SK-N-SH (cell line): ENCODE measurements at regions of chr15 and their contacts with region 1.

Region 1: DNA sequence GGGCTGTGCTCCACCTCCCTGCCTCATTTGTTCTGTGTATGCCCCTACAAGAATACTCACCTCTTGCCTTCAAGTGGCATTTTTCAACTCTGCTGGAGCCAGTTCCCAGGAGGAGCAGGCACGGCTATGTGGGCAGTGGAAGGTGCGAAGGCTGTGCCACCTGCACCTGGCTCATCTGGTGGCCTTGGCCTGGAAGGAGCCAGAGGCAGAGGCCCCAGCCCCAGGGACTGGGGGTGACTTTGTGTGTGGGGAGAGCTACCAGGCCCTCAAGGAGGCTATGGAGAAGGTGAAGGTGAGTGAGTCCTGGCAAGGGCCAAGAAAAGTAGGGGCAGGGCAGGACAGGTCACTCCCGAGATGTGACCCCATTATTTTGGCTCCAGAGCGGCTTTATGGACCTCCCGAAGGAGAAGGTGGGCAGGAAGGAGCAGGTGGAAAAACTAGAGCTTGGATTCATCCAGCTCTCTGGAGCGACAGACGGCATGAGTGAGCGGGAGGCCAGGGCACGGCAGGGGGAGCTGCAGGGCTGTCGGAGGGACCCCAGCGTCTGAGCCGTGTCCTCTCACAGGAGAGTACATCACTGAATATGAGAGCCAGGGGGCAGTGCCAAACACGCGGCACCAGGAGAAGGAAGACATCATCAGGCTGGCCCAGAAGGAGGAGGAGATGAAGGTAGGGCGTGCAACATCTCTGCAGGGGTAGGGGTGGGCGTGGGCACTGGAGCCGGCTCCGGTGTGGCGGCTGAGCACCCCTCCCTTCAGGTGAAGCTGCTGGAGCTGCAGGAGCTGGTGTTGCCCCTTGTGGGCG is 57.3 kb upstream of the UBE2Q2 start:
- DNase-seq: peak; percentile 86
- H3K4me3 ChIP-seq: peak overlapping the region in 1 of 2 experiments; percentile 47; a peak in 3 of 4 replicates
- H3K27ac ChIP-seq: no peak overlapping the region
- H3K4me1 ChIP-seq: peaks cover 0 to 3% of the 10 kb centered on the region in 2 experiments; a peak in 1 of 4 replicates
- H3K27me3 ChIP-seq: peaks cover 49% of the 10 kb centered on the region
- CTCF ChIP-seq: peak; percentile 46
- EP300 ChIP-seq: no peak
- RAD21 ChIP-seq: peak; percentile 82

Region 2: DNA sequence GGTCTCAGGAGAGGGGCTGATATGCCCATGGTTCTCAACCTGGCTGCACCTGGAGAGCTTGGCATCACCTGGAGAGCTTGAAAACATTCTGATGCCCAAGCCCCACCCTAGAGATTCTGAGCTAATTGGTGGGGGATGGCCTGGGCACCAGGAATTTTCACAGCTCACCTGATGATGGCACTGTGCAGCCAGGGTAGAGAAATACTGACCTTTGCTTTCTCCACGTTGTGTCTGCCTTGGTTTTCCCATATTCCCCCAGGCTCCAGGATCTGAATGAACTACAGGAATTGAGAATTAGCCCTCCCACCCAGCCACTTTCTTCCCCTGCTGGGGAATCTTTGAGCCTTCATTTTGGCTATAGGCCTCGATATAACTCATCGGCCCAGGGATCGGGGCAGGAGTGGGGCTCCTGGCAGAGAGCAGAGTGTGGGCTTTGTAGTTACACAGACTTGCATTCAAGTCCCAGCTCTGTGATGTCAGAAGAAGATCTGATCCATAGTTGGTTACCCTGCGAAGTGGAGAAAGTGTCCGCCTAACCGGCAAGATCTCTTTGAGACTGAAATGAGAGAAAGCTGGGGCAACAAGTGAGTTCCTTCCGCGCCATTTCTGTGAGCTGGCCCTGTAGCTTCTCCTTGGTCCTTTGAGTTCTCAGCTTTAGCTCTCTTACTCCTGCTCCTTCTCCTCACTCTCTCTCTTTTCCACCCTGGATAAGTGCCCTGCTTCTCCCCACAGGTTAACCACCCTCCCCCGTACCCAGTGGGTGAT is 24.2 kb after region 1 on chr15:
- CTCF ChIA-PET with region 1: interaction called, 23 read pairs
- POLR2A ChIA-PET with region 1: no interaction called
- DNase-seq: peak; percentile 39
- H3K4me3 ChIP-seq: no peak overlapping the region
- H3K27ac ChIP-seq: no peak overlapping the region
- H3K4me1 ChIP-seq: no peaks in the 10 kb centered on the region
- H3K27me3 ChIP-seq: no peaks in the 10 kb centered on the region
- CTCF ChIP-seq: peak; percentile 51
- EP300 ChIP-seq: no peak
- RAD21 ChIP-seq: peak; percentile 73

Region 3: GRCh38 chr15:75861750-75862402 is 75.9 kb after region 1 on chr15:
- CTCF ChIA-PET with region 1: no interaction called
- POLR2A ChIA-PET with region 1: no interaction called
- DNase-seq: no peak
- H3K4me3 ChIP-seq: no peak overlapping the region
- H3K27ac ChIP-seq: no peak overlapping the region
- H3K4me1 ChIP-seq: no peaks in the 10 kb centered on the region; a peak in 1 of 4 replicates
- H3K27me3 ChIP-seq: no peaks in the 10 kb centered on the region
- CTCF ChIP-seq: no peak
- EP300 ChIP-seq: no peak
- RAD21 ChIP-seq: no peak

Region 4: DNA sequence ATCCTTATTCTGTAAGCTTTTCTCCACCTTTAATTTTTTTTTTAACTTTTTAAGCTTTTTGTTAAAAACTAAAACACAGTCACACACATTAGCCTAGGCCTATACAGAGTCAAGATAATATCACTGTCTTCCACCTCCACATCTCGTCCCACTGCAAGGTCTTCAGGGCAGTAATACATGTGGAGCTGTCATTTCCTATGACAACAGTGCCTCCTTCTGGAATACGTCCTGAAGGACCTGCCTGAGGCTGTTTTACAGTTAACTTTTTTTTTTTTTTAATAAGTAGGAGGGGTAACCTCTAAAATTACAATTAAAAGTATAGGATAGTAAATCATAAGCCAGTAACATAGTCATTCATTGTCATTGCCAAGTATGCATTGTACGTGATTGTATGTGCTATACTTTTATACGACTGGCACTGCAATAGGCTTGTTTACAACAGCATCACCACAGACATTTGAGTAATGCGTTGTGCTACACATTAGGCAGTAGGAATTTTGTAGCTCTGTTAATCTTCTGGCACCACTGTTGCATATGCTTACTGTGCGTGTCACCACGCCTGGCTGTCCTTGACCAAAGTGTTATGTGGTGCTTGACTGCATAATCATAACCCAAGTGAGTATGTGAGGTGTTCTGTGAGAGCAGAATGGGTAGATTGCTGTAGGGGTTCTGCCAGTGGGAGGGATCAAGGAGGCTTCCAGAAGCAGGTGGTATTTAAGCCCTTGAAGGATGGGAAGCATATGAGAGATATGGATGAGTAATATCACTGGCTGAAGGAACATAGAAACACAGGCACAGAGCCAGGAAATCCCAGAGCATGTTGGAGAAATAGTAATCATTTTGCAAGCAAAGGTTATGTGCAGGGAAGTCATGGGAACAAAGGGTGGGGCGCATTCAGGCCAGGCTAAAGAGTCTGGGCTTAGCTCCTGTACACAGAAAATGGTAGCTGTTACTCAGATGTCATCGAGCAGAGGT is 136.0 kb after region 1 on chr15:
- CTCF ChIA-PET with region 1: interaction called, 22 read pairs
- POLR2A ChIA-PET with region 1: no interaction called
- DNase-seq: no peak
- H3K4me3 ChIP-seq: no peak overlapping the region
- H3K27ac ChIP-seq: no peak overlapping the region
- H3K4me1 ChIP-seq: peaks cover 9 to 11% of the 10 kb centered on the region in 2 experiments; a peak in 2 of 4 replicates
- H3K27me3 ChIP-seq: no peaks in the 10 kb centered on the region
- CTCF ChIP-seq: peak; percentile 73
- EP300 ChIP-seq: no peak
- RAD21 ChIP-seq: peak; percentile 56